Activated CD8-positive, alpha-beta T cell treated with anti-CD3 and anti-CD28 coated beads for 36 hours (primary cell): ENCODE measurements at regions of chr1 and their contacts with region 1.

Region 1: DNA sequence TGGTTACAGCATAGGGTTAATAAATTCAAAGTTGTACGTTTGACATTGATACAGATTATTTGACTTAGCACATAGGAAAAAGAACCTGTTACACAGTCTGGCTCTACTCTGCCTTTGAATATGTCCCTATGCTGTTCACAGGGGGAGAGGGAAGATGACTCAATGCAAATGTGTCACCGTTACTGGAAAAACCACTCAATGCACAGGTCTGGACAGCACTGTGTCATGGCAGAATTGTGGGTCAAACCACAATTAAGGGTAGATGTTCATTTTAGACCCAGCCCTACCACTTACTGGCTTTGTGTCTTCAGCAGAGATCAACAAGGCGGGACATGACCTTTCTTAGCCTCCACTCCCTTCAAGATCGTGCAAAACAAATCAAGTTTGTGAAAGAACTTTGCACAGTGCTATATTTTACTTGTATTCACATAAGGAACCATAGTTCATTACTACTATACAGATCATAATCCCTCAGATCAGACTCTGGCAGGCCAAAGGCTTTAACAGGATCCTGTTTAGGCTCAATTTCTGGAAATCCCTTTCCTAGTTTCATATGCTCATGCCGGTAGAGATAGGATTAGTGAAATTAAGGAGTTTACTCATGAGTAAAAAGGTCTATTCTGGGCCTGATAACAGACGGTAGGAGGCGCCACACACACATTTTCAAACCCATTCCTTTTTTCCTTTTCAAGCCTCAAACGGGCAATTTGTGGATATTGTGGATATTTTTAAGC is 22.1 kb downstream of the EIF2D start:
- DNase-seq: peak; percentile 85
- ATAC-seq: peak; percentile 96
- H3K4me3 Mint-ChIP-seq: peak overlapping the region; percentile 55
- H3K27ac Mint-ChIP-seq: peak overlapping the region; percentile 97
- H3K4me1 Mint-ChIP-seq: peaks cover 65% of the 10 kb centered on the region
- H3K27me3 Mint-ChIP-seq: no peaks in the 10 kb centered on the region
- CTCF ChIP-seq: peak; percentile 68

Region 2: DNA sequence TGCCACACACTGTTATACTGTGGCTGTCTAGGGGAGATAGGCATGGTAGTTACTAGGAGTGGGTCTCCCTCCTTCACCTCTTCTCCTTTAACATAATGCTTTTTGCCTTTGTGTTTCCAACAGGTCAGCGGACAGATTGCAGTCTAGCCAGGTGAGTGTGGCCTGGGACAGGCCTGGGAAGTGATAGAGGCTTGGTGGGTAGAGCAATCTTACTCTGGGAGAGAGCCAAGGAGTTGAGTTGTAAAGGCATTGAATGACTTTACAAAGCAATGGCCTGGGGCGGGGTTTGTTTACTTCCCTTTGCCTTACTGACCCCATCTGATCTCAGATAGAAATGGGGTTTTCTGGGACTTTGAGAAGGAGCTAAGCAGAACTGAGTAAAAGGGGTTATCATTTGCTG is 170.9 kb before region 1 on chr1:
- CTCF ChIA-PET with region 1: no interaction called
- POLR2A ChIA-PET with region 1: no interaction called
- intact Hi-C with region 1: no loop called
- DNase-seq: no peak
- ATAC-seq: no peak
- H3K4me3 Mint-ChIP-seq: no peak overlapping the region
- H3K27ac Mint-ChIP-seq: no peak overlapping the region
- H3K4me1 Mint-ChIP-seq: no peaks in the 10 kb centered on the region
- H3K27me3 Mint-ChIP-seq: no peaks in the 10 kb centered on the region
- CTCF ChIP-seq: no peak

Region 3: DNA sequence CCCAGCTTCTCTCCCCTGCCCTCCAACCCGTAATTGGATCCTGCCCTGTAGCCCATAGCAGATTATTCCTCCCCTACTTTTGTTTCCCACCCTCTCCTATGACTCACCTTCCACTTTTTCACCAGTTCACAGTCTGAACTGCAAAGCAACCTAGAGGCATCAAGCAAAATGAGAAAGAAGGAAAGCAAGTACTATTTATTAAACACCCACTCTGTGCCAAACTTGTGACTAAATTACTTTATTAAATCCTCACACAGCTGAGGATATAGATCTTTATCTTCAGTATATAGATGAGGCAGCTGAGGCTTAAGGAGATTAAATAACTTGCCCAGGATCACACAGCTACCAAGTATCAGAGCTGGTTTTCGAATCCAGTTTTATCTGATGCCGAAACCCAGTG is 140.6 kb before region 1 on chr1:
- CTCF ChIA-PET with region 1: no interaction called
- POLR2A ChIA-PET with region 1: no interaction called
- intact Hi-C with region 1: no loop called
- DNase-seq: no peak
- ATAC-seq: no peak
- H3K4me3 Mint-ChIP-seq: no peak overlapping the region
- H3K27ac Mint-ChIP-seq: no peak overlapping the region
- H3K4me1 Mint-ChIP-seq: no peaks in the 10 kb centered on the region
- H3K27me3 Mint-ChIP-seq: no peaks in the 10 kb centered on the region
- CTCF ChIP-seq: no peak

Region 4: GRCh38 chr1:206556750-206557635 is 33.2 kb before region 1 on chr1:
- CTCF ChIA-PET with region 1: interaction called, 583 read pairs
- POLR2A ChIA-PET with region 1: interaction called, 1,021 read pairs
- intact Hi-C with region 1: no loop called
- DNase-seq: peak; percentile 95
- ATAC-seq: peak; percentile 51
- H3K4me3 Mint-ChIP-seq: peak overlapping the region; percentile 96
- H3K27ac Mint-ChIP-seq: peak overlapping the region; percentile 100
- H3K4me1 Mint-ChIP-seq: peaks cover 59% of the 10 kb centered on the region
- H3K27me3 Mint-ChIP-seq: no peaks in the 10 kb centered on the region
- CTCF ChIP-seq: no peak

Region 5: DNA sequence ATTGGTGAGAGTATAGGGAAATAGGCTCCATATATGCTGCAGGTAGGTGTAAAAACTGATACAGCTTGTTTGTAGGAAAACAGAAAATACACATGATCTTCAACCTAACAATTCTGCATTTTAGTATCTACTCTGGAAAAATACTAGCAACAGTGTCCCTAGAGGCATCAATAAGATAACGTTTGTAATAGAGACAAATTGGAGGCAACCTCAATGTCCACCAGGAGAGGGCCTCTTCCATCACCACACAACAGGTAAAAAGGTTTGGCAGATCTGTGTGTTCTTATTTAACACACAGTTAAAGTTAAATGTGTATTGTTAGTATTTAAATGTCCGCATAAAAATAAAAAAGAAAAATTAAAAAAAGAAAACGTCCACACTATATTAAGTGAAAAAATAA is 16.7 kb after region 1 on chr1:
- CTCF ChIA-PET with region 1: interaction called, 17 read pairs
- POLR2A ChIA-PET with region 1: interaction called, 5 read pairs
- intact Hi-C with region 1: no loop called
- DNase-seq: peak; percentile 49
- ATAC-seq: no peak
- H3K4me3 Mint-ChIP-seq: no peak overlapping the region
- H3K27ac Mint-ChIP-seq: peak overlapping the region; percentile 36
- H3K4me1 Mint-ChIP-seq: peaks cover 44% of the 10 kb centered on the region
- H3K27me3 Mint-ChIP-seq: no peaks in the 10 kb centered on the region
- CTCF ChIP-seq: peak; percentile 53